ENCODE measurements at regions of chr2 and their contacts with region 1.

Region 1: DNA sequence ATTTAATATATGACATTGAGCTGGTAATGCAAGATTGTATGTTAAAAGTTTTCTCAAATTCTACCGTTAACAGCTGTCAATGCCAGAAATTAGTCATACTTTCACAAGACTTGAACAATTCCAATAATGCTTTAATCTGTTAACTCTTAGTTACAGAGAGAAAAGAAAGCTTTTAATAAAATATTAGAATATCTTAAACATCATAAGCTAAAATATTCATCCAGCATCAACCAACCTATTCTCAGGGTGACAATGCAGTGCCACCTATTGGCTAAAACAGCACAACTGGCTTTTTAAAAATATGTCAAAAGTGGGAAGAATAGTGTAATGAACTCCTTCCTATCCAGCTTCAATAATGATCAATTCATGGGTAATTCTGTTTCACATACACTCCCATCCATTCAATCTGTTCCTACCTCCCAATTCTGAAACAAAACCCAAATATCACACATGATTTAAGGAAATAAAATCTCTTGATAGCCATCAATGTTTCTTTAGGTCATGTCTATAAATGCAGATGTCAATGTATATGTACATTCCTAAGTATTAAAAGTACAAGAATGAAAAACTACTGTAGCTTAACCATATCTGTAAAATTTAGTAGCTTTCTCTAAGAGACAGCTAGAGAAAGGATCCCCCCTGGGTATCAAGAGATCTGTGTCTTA is 79.8 kb upstream of the CCDC141 start:
- DNase-seq: no peak
- H3K4me3 ChIP-seq: no peak overlapping the region
- H3K27ac ChIP-seq: no peak overlapping the region
- H3K4me1 ChIP-seq: no peaks in the 10 kb centered on the region
- H3K27me3 ChIP-seq: no peaks in the 10 kb centered on the region
- CTCF ChIP-seq: peak in 9 of 11 experiments; percentile 15 to 53 (median 45)
- POLR2A ChIP-seq: no peak

Region 2: DNA sequence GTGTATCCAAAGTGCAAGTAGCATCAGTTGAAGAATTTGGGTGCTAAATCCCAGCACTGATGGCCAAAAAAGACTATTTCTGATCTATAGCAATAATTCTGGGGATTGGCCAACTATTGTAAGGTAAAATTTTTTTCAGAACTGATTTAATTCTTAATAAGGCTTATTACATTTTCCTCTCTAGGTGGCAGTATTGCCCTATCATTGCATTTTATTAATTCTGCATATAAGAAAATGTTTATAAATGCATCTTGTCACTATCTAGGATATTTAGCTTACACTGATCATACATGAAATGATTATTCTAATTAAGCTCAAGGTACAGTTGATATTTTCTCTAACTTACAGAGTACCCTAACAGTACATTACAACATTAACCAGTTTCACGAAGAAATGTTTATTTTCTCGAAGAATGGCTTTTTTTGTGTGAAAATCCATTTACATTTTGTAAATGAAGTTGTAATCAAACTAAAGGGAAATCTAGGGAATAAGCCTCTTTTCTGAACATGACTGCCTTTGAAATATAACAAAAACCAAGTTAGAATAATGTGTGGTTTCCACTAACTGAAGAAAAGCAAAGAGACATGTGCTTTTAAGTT is 333.5 kb before region 1 on chr2:
- intact Hi-C with region 1: loop called (anchors 10 kb)
- DNase-seq: no peak
- H3K4me3 ChIP-seq: no peak overlapping the region
- H3K27ac ChIP-seq: no peak overlapping the region
- H3K4me1 ChIP-seq: no peaks in the 10 kb centered on the region
- H3K27me3 ChIP-seq: no peaks in the 10 kb centered on the region
- CTCF ChIP-seq: peak in 10 of 11 experiments; percentile 31 to 66 (median 50)
- POLR2A ChIP-seq: no peak

Region 3: GRCh38 chr2:178891265-178891958 is 238.3 kb before region 1 on chr2:
- intact Hi-C with region 1: loop called (anchors 10 kb)
- DNase-seq: no peak
- H3K4me3 ChIP-seq: no peak overlapping the region
- H3K27ac ChIP-seq: no peak overlapping the region
- H3K4me1 ChIP-seq: peaks cover 0 to 4% (median 0%) of the 10 kb centered on the region in 6 donors
- H3K27me3 ChIP-seq: no peaks in the 10 kb centered on the region
- CTCF ChIP-seq: peak; percentile 68 to 94 (median 84)
- POLR2A ChIP-seq: no peak

Region 4: DNA sequence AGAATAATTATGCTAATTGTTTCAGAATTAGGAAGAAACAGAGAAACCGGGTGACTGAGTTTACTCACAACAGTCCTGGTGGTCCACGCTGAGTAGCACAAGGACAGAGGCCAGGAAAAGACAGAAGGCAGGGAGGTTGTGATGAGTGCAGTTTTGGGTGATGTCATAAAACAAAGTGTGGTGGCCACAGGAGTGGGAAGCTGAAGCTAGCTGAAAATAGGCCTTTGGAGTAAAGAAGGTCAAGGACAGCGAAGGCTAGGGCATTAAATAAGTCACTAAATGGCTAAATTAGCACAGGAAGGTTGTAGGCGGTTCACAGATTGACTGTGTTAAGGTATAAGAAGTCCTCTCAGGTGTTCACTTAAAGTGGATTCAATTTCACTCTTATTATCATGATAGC is 201.6 kb before region 1 on chr2:
- intact Hi-C with region 1: no loop called
- DNase-seq: no peak
- H3K4me3 ChIP-seq: no peak overlapping the region
- H3K27ac ChIP-seq: no peak overlapping the region
- H3K4me1 ChIP-seq: no peaks in the 10 kb centered on the region
- H3K27me3 ChIP-seq: no peaks in the 10 kb centered on the region
- CTCF ChIP-seq: no peak
- POLR2A ChIP-seq: no peak